A549 (cell line): ENCODE measurements at regions of chr9 and their contacts with region 1.

Region 1: GRCh38 chr9:133103183-133103986 is 17.7 kb downstream of the RALGDS start:
- DNase-seq: peak; percentile 53 to 72
- ATAC-seq: peak; percentile 72 to 90
- H3K4me3 ChIP-seq: no peak overlapping the region
- H3K27ac ChIP-seq: 0 out of 6 replicates have a peak overlapping the region, but pooled peaks of 1 of the 2 experiments have one; percentile 8
- H3K4me1 ChIP-seq: peaks cover 5% of the 10 kb centered on the region; the same call in 1 of the 3 replicates
- CTCF ChIP-seq: peak; percentile 96
- EP300 ChIP-seq: no peak
- POLR2A ChIP-seq: no peak
- RAD21 ChIP-seq: peak; percentile 95 to 97

Region 2: DNA sequence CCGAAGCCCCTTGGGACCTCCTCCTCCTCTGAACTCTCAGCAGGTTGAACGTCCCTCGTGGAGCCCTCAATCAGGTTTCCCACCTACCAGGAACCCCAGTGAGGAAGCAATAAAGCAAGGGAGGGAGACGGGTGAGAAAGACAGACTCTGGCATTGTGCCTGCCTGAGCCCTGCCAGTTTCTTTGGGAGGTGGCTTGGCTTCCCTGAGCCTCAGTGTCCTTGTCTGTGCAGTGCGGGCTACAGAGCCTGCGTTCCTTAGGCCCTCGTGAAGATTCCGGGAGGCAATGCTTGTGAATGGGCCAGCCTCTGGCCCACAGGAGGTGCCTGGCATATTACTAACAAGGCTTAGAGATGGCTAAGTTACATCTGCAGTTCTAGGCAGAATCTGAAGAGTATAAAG is 60.7 kb before region 1 on chr9:
- CTCF ChIA-PET with region 1: interaction called, 15 read pairs
- POLR2A ChIA-PET with region 1: no interaction called
- DNase-seq: no peak
- ATAC-seq: no peak
- H3K4me3 ChIP-seq: no peak overlapping the region
- H3K27ac ChIP-seq: no peak overlapping the region
- H3K4me1 ChIP-seq: no peaks in the 10 kb centered on the region
- CTCF ChIP-seq: no peak
- EP300 ChIP-seq: no peak
- POLR2A ChIP-seq: no peak
- RAD21 ChIP-seq: no peak

Region 3: GRCh38 chr9:133075925-133076630 is 27.3 kb before region 1 on chr9:
- CTCF ChIA-PET with region 1: interaction called, 15 read pairs
- POLR2A ChIA-PET with region 1: no interaction called
- DNase-seq: no peak
- ATAC-seq: peak in 1 of 2 experiments; percentile 46; a peak in 3 of 6 replicates
- H3K4me3 ChIP-seq: no peak overlapping the region
- H3K27ac ChIP-seq: no peak overlapping the region
- H3K4me1 ChIP-seq: no peaks in the 10 kb centered on the region
- CTCF ChIP-seq: no peak
- EP300 ChIP-seq: no peak
- POLR2A ChIP-seq: no peak
- RAD21 ChIP-seq: no peak

Region 4: DNA sequence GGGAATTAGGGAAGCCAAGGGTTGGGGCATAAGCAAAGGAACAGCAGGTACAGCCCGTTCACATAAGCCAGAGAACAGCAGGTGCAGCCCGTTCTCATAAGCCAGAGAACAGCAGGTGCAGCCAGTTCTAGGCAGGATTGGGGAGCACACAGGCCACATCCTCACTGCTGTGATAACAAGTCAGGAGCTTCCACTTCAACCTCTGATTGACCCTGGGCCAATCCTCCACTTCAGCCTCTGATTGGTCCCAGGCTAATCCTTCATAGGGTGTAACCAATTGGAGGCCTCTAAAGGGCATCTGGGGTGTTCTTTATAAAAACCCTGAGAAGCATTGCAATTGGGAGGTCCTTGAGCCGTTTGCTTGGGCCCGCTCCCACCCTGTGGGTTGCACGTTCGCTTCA is 14.1 kb before region 1 on chr9:
- CTCF ChIA-PET with region 1: interaction called, 39 read pairs
- POLR2A ChIA-PET with region 1: no interaction called
- DNase-seq: peak in 1 of 2 experiments; percentile 17
- ATAC-seq: peak in 1 of 2 experiments; percentile 51; a peak in 3 of 6 replicates
- H3K4me3 ChIP-seq: no peak overlapping the region
- H3K27ac ChIP-seq: no peak overlapping the region
- H3K4me1 ChIP-seq: no peaks in the 10 kb centered on the region
- CTCF ChIP-seq: no peak
- EP300 ChIP-seq: no peak
- POLR2A ChIP-seq: no peak
- RAD21 ChIP-seq: no peak

Region 5: GRCh38 chr9:133115448-133116345 is 12.3 kb after region 1 on chr9:
- CTCF ChIA-PET with region 1: interaction called, 143 read pairs
- POLR2A ChIA-PET with region 1: no interaction called
- DNase-seq: no peak
- ATAC-seq: no peak
- H3K4me3 ChIP-seq: no peak overlapping the region
- H3K27ac ChIP-seq: 0 out of 6 replicates have a peak overlapping the region, but pooled peaks of 1 of the 2 experiments have one; percentile 4
- H3K4me1 ChIP-seq: peaks cover 11% of the 10 kb centered on the region
- CTCF ChIP-seq: no peak
- EP300 ChIP-seq: no peak
- POLR2A ChIP-seq: no peak
- RAD21 ChIP-seq: no peak

Region 6: DNA sequence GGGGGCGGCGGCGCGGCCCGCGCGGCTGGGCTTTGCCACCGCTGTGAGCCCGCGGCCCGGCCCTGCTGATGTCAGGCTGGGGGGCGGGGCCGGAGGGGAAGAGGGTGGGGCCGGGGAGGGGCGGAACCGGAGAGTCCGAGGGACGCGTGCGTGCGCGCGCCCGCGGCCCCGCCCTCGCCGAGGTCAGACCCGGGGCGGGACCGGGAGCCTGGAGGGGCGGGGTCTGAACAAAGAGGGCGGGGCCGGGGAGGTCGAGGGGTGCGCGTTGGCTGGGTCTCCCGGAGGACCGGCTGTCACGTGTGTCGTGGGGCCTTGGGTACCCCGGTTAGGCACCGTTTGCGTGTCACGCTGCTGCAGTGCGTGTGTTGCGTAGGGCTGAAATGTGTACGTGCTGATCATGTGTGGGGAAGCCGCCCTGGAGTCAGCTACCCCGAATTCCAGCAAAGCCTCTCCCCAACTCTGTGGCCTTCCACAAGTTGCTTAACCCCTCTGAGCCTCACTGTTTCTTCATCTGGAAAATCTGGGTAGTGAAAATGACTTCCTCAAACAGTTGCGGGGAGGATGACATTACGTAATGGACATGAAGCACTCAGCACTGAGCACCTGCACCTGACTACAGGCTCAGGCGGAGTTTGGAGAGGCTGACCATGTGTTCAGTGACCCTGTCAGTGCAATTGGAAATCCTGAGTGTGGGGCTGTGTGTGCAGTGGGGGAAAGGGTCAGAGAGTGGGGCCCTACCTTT is 18.0 kb after region 1 on chr9 and contains the start of gene RALGDS:
- CTCF ChIA-PET with region 1: interaction called, 1,284 read pairs
- POLR2A ChIA-PET with region 1: no interaction called
- DNase-seq: peak; percentile 82 to 86
- ATAC-seq: peak; percentile 74 to 81
- H3K4me3 ChIP-seq: peak within 1 kb of the TSS; percentile 94
- H3K27ac ChIP-seq: peak within 1 kb of the TSS; percentile 80 to 95
- H3K4me1 ChIP-seq: peaks cover 20% of the 10 kb centered on the region
- CTCF ChIP-seq: no peak
- EP300 ChIP-seq: no peak
- POLR2A ChIP-seq: no peak
- RAD21 ChIP-seq: no peak
- polyA plus RNA-seq, gene RALGDS: 12.1 and 14.8 TPM in 2 replicates